T-cell (primary cell): ENCODE measurements at regions of chr14 and their contacts with region 1.

Region 1: GRCh38 chr14:76820700-76821099 is 5.5 kb upstream of the LRRC74A start:
- DNase-seq: no peak
- ATAC-seq: no peak
- H3K4me3 ChIP-seq: no peak overlapping the region
- H3K4me3 Mint-ChIP-seq: no peak overlapping the region
- H3K27ac ChIP-seq: no peak overlapping the region
- H3K27ac Mint-ChIP-seq: no peak overlapping the region
- H3K4me1 ChIP-seq: no peaks in the 10 kb centered on the region
- H3K4me1 Mint-ChIP-seq: no peaks in the 10 kb centered on the region
- H3K27me3 ChIP-seq: peaks cover 0 to 13% of the 10 kb centered on the region in 2 experiments
- H3K27me3 Mint-ChIP-seq: peaks cover 8 to 16% of the 10 kb centered on the region in 2 donors

Region 2: GRCh38 chr14:76862546-76863282 is 42.0 kb after region 1 on chr14:
- CTCF ChIA-PET with region 1: no interaction called
- POLR2A ChIA-PET with region 1: interaction called in 1 of 2 experiments, 17 read pairs
- DNase-seq: no peak
- ATAC-seq: peak in 3 of 4 experiments; percentile 35 to 51 (median 44)
- H3K4me3 ChIP-seq: no peak overlapping the region
- H3K4me3 Mint-ChIP-seq: no peak overlapping the region
- H3K27ac ChIP-seq: no peak overlapping the region
- H3K27ac Mint-ChIP-seq: peak overlapping the region in 1 of 2 donors; percentile 13
- H3K4me1 ChIP-seq: peaks cover 3 to 15% of the 10 kb centered on the region in 2 experiments
- H3K4me1 Mint-ChIP-seq: peaks cover 19 to 38% (median 37%) of the 10 kb centered on the region in 3 donors
- H3K27me3 ChIP-seq: peaks cover 0 to 20% of the 10 kb centered on the region in 2 experiments
- H3K27me3 Mint-ChIP-seq: peaks cover 0 to 2% of the 10 kb centered on the region in 2 donors

Region 3: GRCh38 chr14:77028384-77029231 is 207.9 kb after region 1 on chr14 and contains the start of gene IRF2BPL:
- CTCF ChIA-PET with region 1: no interaction called
- POLR2A ChIA-PET with region 1: no interaction called
- DNase-seq: peak; percentile 89 to 98 (median 93)
- ATAC-seq: peak; percentile 72 to 77 (median 74)
- H3K4me3 ChIP-seq: peak within 1 kb of the TSS; percentile 85 to 95
- H3K4me3 Mint-ChIP-seq: peak within 1 kb of the TSS; percentile 88 to 99 (median 91)
- H3K27ac ChIP-seq: peak within 1 kb of the TSS; percentile 98
- H3K27ac Mint-ChIP-seq: peak within 1 kb of the TSS; percentile 94 to 97
- H3K4me1 ChIP-seq: peaks cover 46 to 81% of the 10 kb centered on the region in 2 experiments
- H3K4me1 Mint-ChIP-seq: peaks cover 62 to 73% (median 67%) of the 10 kb centered on the region in 3 donors
- H3K27me3 ChIP-seq: no peaks in the 10 kb centered on the region
- H3K27me3 Mint-ChIP-seq: no peaks in the 10 kb centered on the region
- total RNA-seq, gene IRF2BPL: 32.6 to 50.4 (median 38.8) TPM